Posterior vena cava (tissue), 2 donors: ENCODE measurements at regions of chr6 and their contacts with region 1.

Region 1: GRCh38 chr6:161370880-161371279 is 97.0 kb upstream of the AGPAT4 start:
- DNase-seq: no peak

Region 2: DNA sequence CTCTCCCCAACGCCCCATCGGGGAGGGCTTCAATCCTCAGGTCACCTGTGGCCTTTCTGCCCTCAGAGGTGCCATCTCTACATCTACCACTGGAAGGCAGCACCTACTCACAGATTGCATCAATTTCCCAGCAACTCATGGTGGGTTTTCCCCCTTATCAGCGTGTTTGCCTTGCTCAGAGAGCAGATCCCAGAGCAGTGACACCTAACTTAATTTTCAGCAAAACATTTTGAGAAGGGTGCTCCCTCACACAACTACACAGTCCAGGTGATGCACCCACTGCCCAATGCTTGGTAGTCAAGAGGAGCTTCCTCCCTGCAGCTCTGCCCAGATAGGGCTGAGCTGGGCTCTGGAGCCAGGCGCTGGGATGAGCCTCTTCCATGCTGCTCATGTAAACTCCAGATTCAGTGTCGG is 620.6 kb before region 1 on chr6:
- intact Hi-C with region 1: loop called in 1 of 2 experiments (anchors 2 kb)
- DNase-seq: no peak

Region 3: DNA sequence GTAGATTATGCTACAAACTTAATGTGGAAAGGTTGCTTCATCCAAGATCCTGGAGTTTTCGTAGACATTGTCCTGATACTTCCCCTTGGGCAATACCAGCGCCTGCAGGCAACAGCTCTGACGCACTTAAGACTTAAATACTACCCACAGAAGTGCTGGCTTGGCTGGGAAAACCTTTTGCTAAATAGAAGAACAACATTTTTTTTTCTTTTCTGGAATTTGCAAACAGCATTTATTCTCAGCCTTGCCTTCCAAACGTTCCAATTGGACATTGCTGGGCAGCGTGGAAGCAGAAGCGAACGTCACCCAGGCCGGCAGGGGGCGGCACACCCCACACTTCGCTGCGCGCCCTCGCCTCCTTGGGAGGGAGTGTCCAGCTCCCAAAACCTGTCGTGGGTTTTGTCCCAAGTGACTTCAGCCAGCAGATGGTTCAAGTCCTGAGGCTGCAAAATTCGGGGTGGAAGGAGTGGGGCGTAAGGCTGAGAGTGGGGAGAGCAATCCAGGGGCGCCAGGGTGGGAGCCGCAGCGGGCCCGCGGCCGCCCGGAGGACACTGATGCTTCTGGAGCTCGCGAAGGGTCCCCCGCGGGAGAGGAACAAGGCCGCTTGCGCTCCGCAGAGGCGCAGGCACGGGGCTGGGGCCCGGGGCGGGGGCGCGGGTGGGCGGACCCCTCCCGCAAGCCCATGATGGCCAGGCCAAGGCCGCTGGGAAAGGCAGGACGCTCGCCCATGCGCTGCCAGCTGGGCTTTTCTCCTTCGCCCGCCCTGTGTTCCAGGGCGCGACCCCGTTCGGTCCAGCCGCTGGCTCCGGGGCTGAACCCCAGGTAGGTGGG is 440.1 kb before region 1 on chr6:
- intact Hi-C with region 1: loop called (anchors 5 kb)
- DNase-seq: peak; percentile 94

Region 4: DNA sequence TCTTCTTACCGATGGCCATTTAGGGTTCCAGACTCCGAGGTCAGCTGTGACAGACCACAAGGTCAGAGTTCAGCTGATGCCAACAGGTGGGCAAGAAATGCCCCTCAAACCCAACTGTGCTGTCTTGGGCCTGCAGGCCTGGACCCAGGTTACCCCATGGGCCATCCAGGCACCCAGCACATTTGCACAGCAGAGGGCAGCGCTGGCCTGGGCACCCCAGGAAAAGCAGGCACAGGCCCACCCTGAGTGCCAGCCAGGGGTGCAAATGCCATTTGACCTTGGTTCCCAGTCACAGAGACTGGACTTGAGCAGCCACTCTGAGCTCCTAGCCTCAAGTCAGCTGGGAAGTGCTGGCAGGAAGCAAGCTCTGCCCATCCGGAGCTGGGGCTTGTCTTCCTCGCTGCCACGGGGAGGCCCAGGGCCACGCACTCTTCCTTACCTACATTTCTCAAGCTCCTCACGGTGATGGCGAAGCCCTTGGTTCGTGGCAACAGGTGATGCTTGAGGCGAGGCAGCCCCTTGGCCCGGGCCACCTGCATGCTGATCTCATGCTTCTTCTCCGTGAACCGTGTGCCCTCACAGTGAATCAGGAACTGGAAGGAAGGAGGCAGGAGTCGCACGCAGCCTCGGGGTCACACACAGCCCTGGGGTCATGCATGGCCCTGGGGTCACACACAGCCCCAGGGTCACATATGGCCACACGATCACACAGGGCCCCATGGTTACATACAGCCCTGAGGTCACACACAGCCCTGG is 217.8 kb before region 1 on chr6:
- intact Hi-C with region 1: loop called in 1 of 2 experiments (anchors 5 kb)
- DNase-seq: no peak